ENCODE measurements at regions of chr7 and their contacts with region 1.

Region 1: GRCh38 chr7:12686894-12687717 is at the start of gene ARL4A:
- DNase-seq: peak; percentile 95
- ATAC-seq: peak; percentile 75
- H3K4me3 Mint-ChIP-seq: peak within 1 kb of the TSS; percentile 88
- H3K27ac Mint-ChIP-seq: peak within 1 kb of the TSS; percentile 95
- H3K4me1 Mint-ChIP-seq: peaks cover 27% of the 10 kb centered on the region
- H3K27me3 Mint-ChIP-seq: no peaks in the 10 kb centered on the region
- CTCF ChIP-seq: peak; percentile 65
- total RNA-seq, gene ARL4A: 10.8 to 11.3 TPM

Region 2: DNA sequence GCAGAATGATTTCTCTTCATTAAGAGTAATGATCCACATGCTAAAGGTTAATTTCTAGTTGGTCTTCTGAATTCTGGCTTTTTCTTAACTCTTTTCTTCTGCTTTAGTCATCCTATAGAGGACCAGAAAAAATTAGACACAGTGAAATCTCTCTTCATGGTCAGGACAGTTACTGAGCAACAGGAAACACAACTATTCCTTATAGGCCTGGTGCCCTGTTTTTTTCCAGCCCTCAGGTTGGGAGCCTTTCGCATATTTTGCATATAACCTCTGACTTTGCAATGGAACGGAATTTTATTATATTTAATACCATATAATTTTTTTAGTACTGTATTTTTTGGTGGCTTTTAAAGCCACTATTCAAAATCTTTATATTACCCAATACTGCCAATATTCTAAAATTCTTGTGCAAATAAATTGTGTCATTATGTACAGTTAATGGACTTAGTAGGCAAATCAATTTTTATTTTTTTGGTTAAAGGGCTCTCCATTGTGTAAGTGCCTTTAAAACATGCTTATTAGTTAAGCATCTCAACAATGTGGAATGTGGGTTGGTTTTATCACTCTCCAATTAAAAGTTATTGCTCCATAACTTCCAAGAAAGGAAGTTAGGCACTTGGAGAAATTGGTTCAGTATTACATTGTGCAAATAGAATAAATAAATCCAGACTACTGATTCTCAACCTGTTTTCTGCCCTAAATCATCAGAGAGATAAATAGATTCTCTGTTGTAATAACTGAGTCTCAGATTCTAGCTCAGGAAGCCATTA is 22.8 kb after region 1 on chr7:
- CTCF ChIA-PET with region 1: interaction called, 10 read pairs
- POLR2A ChIA-PET with region 1: no interaction called
- intact Hi-C with region 1: no loop called
- DNase-seq: no peak
- ATAC-seq: no peak
- H3K4me3 Mint-ChIP-seq: no peak overlapping the region
- H3K27ac Mint-ChIP-seq: no peak overlapping the region
- H3K4me1 Mint-ChIP-seq: peaks cover 1% of the 10 kb centered on the region
- H3K27me3 Mint-ChIP-seq: no peaks in the 10 kb centered on the region
- CTCF ChIP-seq: no peak

Region 3: GRCh38 chr7:12715372-12716133 is 28.4 kb after region 1 on chr7:
- CTCF ChIA-PET with region 1: interaction called, 20 read pairs
- POLR2A ChIA-PET with region 1: no interaction called
- intact Hi-C with region 1: no loop called
- DNase-seq: peak; percentile 73
- ATAC-seq: peak; percentile 94
- H3K4me3 Mint-ChIP-seq: peak overlapping the region; percentile 8
- H3K27ac Mint-ChIP-seq: peak overlapping the region; percentile 55
- H3K4me1 Mint-ChIP-seq: peaks cover 38% of the 10 kb centered on the region
- H3K27me3 Mint-ChIP-seq: no peaks in the 10 kb centered on the region
- CTCF ChIP-seq: no peak